Esophagus muscularis mucosa (tissue), 4 donors: ENCODE measurements at regions of chr2 and their contacts with region 1.

Region 1: DNA sequence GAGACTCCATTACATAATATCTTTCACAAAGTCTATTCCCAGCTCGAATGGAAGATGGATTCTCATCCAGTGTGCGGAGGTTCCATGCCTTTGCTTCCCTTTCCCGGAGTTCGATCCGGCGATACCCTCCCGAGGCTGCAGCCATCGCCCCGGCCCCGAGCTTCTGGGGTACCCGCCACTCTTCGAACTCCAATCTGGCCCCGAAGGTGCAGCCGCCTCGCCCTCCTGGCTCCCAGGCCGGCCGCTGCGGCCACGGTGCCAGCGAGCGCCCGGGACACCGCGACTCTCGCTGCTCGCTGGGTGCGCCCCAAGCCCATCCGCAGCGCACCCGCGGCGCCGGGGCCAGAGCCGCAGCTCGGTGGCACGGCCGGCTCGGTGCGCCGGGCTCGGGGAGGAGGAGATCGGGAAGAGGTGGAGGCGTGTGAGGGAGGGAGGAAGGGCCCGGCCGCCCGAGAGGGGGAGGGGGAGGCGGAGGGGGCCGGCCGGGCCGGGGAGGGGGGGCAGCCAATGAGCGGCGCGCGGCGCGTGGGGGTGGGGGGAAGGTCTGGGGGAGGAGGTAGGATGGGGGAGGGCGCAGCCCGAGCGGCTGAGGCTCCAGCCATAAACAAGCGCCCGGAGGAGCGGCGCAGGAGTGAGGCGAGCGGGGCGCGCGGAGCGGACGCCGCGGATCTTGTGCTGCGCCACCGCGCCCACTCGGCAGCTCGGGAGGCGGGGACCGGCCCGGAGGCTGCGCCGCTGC is at the start of gene CRIM1:
- DNase-seq: peak; percentile 95
- H3K4me3 ChIP-seq: peak within 1 kb of the TSS; percentile 81 to 98 (median 88)
- H3K27ac ChIP-seq: peak within 1 kb of the TSS; percentile 91 to 94 (median 94)
- H3K4me1 ChIP-seq: peaks cover 30 to 60% (median 54%) of the 10 kb centered on the region in 4 donors
- H3K27me3 ChIP-seq: no peaks in the 10 kb centered on the region
- CTCF ChIP-seq: no peak
- EP300 ChIP-seq: no peak
- POLR2A ChIP-seq: peak; percentile 57
- total RNA-seq, gene CRIM1: 140 to 429 (median 201) TPM

Region 2: DNA sequence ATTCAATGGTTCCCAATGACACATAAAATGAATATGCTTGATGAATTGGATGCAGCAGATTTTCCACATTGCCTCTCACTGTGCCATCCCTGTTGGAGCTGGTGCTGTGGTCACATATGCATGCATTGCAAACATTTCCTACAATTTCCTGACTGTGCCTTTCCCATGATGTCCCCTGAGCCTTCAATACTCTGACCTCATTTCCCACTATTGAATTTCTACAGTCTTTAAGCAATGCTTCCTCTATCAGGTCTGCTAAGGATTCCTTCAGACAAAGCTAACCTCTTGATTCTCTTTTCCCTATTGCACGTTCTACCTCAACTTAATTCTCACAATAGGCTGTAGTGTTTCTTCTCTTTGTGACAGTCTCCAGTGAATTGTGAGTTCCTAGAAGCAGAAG is 342.3 kb before region 1 on chr2:
- intact Hi-C with region 1: no loop called
- DNase-seq: no peak
- H3K4me3 ChIP-seq: no peak overlapping the region
- H3K27ac ChIP-seq: no peak overlapping the region
- H3K4me1 ChIP-seq: no peaks in the 10 kb centered on the region
- H3K27me3 ChIP-seq: no peaks in the 10 kb centered on the region
- CTCF ChIP-seq: no peak
- EP300 ChIP-seq: no peak
- POLR2A ChIP-seq: no peak

Region 3: DNA sequence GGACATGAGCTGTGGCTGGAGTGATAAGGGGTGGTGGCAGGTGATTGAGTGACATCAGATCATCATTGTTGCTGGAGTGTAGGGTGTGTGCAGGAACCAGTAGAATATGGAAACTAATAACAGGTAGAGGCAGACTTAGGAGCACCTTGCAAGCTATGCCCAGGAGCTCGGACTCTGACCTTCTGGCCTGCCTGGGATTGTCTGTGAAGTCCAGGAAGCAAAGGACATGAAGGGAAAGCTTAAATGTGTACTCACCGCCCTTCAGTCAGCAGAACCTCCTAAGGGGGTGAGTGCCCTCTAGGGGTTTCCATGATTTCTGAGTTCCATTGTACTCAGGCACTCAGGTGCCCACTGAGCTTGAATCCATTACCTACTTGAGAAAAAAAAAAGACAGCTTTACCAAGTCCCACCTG is 104.4 kb after region 1 on chr2:
- intact Hi-C with region 1: loop called (anchors 10 kb)
- DNase-seq: peak; percentile 66
- H3K4me3 ChIP-seq: no peak overlapping the region
- H3K27ac ChIP-seq: peak overlapping the region; percentile 2 to 72 (median 69)
- H3K4me1 ChIP-seq: peaks cover 57 to 82% (median 79%) of the 10 kb centered on the region in 4 donors
- H3K27me3 ChIP-seq: no peaks in the 10 kb centered on the region
- CTCF ChIP-seq: peak; percentile 42 to 51 (median 51)
- EP300 ChIP-seq: no peak
- POLR2A ChIP-seq: no peak

Region 4: GRCh38 chr2:36507408-36507812 is 152.1 kb after region 1 on chr2:
- intact Hi-C with region 1: loop called (anchors 5 kb)
- DNase-seq: no peak
- H3K4me3 ChIP-seq: no peak overlapping the region
- H3K27ac ChIP-seq: peak overlapping the region in 1 of 4 donors; percentile 10
- H3K4me1 ChIP-seq: peaks cover 0 to 3% (median 0%) of the 10 kb centered on the region in 4 donors
- H3K27me3 ChIP-seq: no peaks in the 10 kb centered on the region
- CTCF ChIP-seq: peak; percentile 58 to 79 (median 62)
- EP300 ChIP-seq: no peak
- POLR2A ChIP-seq: no peak

Region 5: GRCh38 chr2:36663851-36664695 is 308.8 kb after region 1 on chr2:
- intact Hi-C with region 1: loop called (anchors 2 kb)
- DNase-seq: no peak
- H3K4me3 ChIP-seq: no peak overlapping the region
- H3K27ac ChIP-seq: peak overlapping the region in 1 of 4 donors; percentile 26
- H3K4me1 ChIP-seq: peaks cover 3 to 28% (median 26%) of the 10 kb centered on the region in 4 donors
- H3K27me3 ChIP-seq: no peaks in the 10 kb centered on the region
- CTCF ChIP-seq: peak; percentile 58 to 77 (median 63)
- EP300 ChIP-seq: no peak
- POLR2A ChIP-seq: no peak